ENCODE measurements at regions of chr2 and their contacts with region 1.

Region 1: DNA sequence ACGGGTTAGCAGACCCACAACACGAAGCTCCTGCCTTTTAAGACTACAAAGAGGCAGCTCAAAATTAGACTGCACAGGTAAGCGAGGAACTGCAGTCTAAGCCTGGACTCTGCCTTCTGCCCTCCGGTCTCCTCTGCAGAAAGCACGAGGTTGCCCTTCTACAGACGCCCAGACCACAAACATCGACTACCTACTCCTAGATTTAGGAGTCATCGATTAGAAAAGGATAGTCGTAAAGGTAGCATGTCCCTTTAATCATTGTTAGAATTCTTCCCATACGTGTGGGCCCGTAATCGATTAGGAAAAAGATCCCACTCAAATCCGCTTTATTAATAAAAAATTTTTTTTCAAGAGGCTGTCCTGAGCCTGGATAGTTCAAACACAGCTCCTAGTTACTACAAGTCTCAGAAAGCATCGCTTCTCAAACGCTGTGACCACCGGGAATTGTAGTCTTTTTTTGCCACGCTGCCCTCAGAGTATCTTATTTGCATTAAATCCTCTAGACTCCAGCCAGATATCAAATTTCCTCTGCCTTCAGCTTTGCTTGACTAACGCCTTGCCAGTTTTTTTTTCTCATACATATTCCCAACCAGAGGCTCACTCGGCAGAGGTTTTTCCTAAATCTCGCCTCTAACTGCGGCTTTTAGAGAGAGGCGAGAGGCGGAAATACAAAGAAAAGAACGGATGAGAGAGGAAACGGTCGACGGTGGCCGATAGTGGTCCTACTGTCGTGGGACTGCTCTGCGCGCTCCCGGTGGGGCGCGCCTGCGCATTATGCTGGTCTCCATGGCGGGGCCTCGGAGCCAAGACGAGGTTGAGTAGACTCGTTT is at the starts of genes CARF and WDR12:
- DNase-seq: peak; percentile 93
- H3K4me3 ChIP-seq: peak within 1 kb of the TSS; percentile 48 to 55
- H3K27ac ChIP-seq: peak within 1 kb of the TSS; percentile 84 to 88
- H3K4me1 ChIP-seq: no peaks in the 10 kb centered on the region
- H3K27me3 ChIP-seq: no peaks in the 10 kb centered on the region
- CTCF ChIP-seq: peak in 1 of 4 experiments; percentile 0
- POLR2A ChIP-seq: peak; percentile 27
- total RNA-seq, gene CARF: 14.3 to 15.8 TPM
- total RNA-seq, gene WDR12: 8.9 to 10.5 TPM

Region 2: GRCh38 chr2:203014456-203015199 is 102.9 kb after region 1 on chr2 and contains the start of gene NBEAL1:
- intact Hi-C with region 1: loop called (anchors 10 kb)
- DNase-seq: peak; percentile 98
- H3K4me3 ChIP-seq: peak within 1 kb of the TSS; percentile 90 to 91
- H3K27ac ChIP-seq: peak within 1 kb of the TSS; percentile 93 to 94
- H3K4me1 ChIP-seq: no peaks in the 10 kb centered on the region
- H3K27me3 ChIP-seq: no peaks in the 10 kb centered on the region
- CTCF ChIP-seq: no peak
- POLR2A ChIP-seq: peak; percentile 86
- total RNA-seq, gene NBEAL1: 21.2 to 47.1 TPM

Measured in prostate gland (tissue), 2 donors.